PC-9 (cell line): ENCODE measurements at regions of chr17 and their contacts with region 1.

Region 1: DNA sequence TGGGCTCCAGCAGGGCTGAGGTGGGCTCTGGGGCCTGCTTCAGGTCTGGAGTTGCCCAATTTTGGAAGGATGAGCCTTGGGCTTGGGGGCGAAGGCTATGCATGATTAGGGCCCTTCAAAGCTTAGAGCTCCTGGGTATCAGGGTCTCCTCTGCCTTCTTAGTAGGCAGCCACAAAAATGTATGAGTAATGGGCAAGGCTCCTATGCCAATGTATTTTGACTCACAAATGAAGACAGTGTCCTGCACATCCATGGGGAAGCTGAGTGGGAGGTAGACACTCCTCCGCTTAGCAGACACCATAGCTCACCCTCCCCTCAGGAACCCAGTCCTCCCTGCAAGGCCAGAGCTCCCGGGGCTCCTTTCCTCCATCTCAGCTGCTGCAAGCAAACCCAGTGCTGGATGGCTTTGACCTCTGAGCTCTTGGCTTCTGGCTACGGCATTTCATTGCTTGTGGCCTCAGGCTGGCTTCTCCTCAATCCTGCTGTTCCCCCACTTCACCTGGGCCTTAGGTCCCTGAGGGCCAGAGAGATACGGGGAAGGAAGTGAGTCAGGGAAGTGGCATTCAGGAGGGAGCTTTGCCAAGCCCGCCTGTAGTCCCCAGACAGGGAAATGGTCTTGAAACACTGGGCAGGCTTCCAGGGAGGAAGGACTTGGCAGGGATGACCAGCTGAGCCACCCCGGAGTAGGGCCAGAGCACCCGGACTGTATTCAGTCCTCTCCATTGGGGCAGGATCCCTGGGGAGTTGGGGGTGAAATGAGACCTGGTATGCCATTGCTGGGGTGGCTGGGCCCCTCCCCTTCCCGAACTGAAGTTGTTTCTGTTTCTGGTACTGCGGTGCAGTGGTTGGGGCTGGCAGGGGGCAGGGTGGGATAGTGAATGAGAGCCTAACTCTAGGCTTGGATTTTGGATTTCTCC is 4.4 kb downstream of the ABCC3 start:
- DNase-seq: peak; percentile 97 to 100
- H3K4me3 ChIP-seq: peak overlapping the region; percentile 81; the same call in 1 of the 2 replicates
- H3K27ac ChIP-seq: peak overlapping the region; percentile 91
- H3K4me1 ChIP-seq: peaks cover 78% of the 10 kb centered on the region
- H3K27me3 ChIP-seq: no peaks in the 10 kb centered on the region
- CTCF ChIP-seq: no peak

Region 2: DNA sequence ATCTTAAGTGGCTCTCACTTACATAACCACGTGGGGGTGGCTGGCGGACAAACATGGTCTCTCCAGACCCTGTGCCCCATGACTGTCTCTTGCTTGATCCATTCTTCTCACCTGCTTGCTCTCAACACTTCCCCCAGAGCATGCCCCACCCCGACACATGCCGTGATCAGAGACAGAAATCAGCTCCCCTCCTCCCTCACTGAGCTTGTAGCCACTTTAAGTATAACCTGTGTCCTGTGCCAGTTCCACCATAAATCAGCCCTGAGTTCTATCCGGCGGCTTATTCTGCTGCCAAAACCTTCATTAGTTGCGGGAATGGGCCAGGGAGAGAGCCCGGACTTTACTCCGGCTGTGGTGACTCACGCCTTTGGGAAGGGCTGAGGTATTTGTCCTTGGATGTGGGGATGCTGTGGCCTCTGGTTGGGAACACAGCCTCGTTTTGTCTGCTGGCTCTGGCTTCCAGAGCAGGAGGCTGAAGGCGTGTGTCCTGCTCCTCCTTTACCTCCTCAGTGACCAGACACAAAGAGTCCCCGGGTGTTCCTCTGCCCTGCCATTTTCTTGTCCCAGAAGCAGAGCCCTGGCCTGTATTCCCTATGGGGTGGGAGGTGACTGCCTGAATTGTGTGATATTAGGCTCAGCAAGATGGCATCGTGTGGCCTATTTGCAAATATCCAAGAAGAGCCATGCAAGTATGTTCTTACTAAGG is 47.5 kb after region 1 on chr17:
- CTCF ChIA-PET with region 1: no interaction called
- POLR2A ChIA-PET with region 1: interaction called, 4 read pairs
- intact Hi-C with region 1: loop called (anchors 2 kb)
- DNase-seq: peak in 1 of 2 experiments; percentile 60
- H3K4me3 ChIP-seq: no peak overlapping the region
- H3K27ac ChIP-seq: peak overlapping the region; percentile 33; the same call in 1 of the 2 replicates
- H3K4me1 ChIP-seq: peaks cover 81% of the 10 kb centered on the region
- H3K27me3 ChIP-seq: no peaks in the 10 kb centered on the region
- CTCF ChIP-seq: no peak

Region 3: GRCh38 chr17:51064061-51064735 is 425.1 kb after region 1 on chr17:
- CTCF ChIA-PET with region 1: no interaction called
- POLR2A ChIA-PET with region 1: no interaction called
- intact Hi-C with region 1: no loop called
- DNase-seq: peak in 1 of 2 experiments; percentile 41
- H3K4me3 ChIP-seq: no peak overlapping the region
- H3K27ac ChIP-seq: no peak overlapping the region
- H3K4me1 ChIP-seq: peaks cover 18% of the 10 kb centered on the region
- H3K27me3 ChIP-seq: no peaks in the 10 kb centered on the region
- CTCF ChIP-seq: no peak